ENCODE measurements at regions of chr22 and their contacts with region 1.

Region 1: DNA sequence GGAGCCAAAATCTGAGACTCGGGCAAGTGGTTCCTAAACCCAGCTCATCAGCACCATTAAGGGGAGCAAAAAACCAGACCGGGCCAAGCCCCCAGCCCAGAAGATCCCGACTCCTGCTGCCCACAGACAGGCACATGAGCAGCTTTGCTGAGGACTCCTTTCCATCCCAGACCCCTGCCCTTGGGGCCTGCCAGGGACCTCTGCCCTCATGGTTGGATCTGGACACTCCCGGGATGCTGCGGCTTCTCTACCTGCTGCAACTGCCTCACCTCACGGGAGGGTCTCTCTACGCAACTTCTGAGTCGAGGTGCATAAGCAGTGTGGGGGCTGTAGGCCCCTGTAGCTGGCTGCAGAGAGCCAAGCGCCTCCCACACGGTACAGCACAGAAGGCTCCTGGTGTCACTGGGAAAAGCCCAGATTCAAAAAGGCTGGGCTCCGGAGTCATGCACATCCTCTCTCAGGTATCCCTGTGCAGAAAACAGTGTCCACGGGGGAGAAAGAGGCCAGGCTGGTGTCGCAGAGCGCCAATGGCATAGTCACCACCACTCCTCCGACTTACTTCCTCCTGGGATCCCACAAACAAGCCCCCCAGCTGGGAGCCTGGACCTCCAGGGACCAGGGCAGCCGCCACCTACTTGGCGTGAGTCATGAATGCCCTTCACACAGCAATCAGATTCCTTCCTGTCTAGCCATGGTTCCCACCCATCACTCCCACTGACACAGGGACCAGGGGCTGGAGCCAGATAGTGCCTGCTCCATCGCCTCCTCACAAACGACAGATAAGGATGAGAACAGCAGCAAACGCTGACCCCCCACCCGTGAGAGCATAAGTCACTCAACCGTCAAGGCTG is 122.1 kb downstream of the BCR start:
- DNase-seq: no peak
- H3K4me3 ChIP-seq: no peak overlapping the region
- CTCF ChIP-seq: no peak

Region 2: GRCh38 chr22:22877523-22878210 is 424.7 kb before region 1 on chr22:
- CTCF ChIA-PET with region 1: no interaction called
- POLR2A ChIA-PET with region 1: no interaction called
- DNase-seq: no peak
- H3K4me3 ChIP-seq: no peak overlapping the region
- CTCF ChIP-seq: peak; percentile 81

Region 3: DNA sequence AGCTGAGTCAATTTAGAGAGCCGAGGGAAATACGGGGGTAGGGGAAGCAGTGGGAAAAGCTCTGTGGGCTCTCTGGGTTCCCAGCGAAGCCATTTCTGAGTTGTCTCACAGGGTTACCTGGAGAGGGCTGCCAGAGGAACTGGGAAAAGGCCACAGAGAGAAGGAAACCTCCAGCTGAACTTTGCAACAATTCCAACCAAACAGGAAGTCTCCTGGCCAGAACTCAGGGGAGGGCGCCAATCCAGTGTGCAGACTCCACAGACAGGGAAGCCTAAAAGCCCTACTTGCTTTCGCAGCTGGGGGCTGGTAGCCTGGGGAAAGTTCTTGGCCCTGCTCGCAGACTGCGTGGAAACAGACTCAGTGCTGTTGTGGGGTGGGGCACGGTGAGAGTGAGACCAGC is 255.1 kb before region 1 on chr22:
- CTCF ChIA-PET with region 1: no interaction called
- POLR2A ChIA-PET with region 1: no interaction called
- DNase-seq: no peak
- H3K4me3 ChIP-seq: no peak overlapping the region
- CTCF ChIP-seq: no peak

Region 4: DNA sequence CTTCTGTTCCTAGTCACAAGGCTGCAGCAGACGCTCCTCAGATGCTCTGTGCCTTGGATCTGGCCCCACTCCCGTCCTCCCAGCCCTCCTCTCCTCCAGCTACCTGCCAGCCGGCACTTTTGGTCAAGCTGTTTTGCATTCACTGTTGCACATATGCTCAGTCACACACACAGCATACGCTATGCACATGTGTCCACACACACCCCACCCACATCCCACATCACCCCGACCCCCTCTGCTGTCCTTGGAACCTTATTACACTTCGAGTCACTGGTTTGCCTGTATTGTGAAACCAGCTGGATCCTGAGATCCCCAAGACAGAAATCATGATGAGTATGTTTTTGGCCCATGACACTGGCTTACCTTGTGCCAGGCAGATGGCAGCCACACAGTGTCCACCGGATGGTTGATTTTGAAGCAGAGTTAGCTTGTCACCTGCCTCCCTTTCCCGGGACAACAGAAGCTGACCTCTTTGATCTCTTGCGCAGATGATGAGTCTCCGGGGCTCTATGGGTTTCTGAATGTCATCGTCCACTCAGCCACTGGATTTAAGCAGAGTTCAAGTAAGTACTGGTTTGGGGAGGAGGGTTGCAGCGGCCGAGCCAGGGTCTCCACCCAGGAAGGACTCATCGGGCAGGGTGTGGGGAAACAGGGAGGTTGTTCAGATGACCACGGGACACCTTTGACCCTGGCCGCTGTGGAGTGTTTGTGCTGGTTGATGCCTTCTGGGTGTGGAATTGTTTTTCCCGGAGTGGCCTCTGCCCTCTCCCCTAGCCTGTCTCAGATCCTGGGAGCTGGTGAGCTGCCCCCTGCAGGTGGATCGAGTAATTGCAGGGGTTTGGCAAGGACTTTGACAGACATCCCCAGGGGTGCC is 12.3 kb before region 1 on chr22:
- CTCF ChIA-PET with region 1: interaction called, 11 read pairs
- POLR2A ChIA-PET with region 1: no interaction called
- DNase-seq: no peak
- H3K4me3 ChIP-seq: no peak overlapping the region
- CTCF ChIP-seq: peak; percentile 91